PC-3 (cell line): ENCODE measurements at regions of chr10 and their contacts with region 1.

Region 1: DNA sequence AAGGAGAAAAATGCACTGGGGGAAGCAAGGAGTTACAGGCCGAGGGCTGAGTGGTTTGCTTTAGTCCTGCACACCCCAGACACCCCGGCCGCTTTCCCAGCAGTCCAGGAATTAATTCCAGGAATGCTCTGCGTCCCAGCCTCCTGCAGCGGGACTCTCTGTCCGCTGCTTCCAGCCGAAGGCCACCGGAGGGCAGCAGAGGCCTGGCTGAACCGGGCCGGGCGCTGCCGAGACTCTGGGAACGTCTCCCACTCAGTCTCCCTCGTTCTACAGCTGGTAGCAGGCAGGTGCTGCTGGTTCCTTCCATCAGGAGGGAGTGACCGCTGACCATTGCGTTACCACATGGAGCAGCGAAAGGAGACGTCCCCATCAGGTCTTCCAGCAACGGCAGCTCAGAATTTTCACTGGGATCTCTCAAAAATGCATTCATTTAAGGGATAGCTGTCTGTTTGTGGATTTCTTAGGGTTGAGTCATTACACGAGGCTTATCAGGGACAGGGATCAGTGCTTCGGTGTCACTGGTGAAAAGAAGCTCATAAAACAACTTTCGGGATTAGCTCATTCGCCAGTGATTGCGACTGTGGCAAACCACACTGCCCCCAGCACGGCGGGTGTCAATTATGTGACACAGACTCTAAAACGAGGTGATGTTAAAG is 24.9 kb upstream of the PITRM1 start:
- DNase-seq: peak; percentile 74
- ATAC-seq: peak; percentile 83
- H3K4me3 ChIP-seq: peak overlapping the region; percentile 56
- H3K27ac ChIP-seq: peak overlapping the region; percentile 83
- H3K4me1 ChIP-seq: peaks cover 15% of the 10 kb centered on the region
- H3K27me3 ChIP-seq: no peaks in the 10 kb centered on the region
- CTCF ChIP-seq: peak; percentile 72

Region 2: GRCh38 chr10:3226960-3227744 is 29.7 kb after region 1 on chr10:
- CTCF ChIA-PET with region 1: interaction called, 6 read pairs
- POLR2A ChIA-PET with region 1: no interaction called
- intact Hi-C with region 1: loop called (anchors 2 kb)
- DNase-seq: peak; percentile 79
- ATAC-seq: peak; percentile 95
- H3K4me3 ChIP-seq: peak overlapping the region; percentile 47; the same call in 1 of the 2 replicates
- H3K27ac ChIP-seq: peak overlapping the region; percentile 93
- H3K4me1 ChIP-seq: peaks cover 20% of the 10 kb centered on the region
- H3K27me3 ChIP-seq: no peaks in the 10 kb centered on the region
- CTCF ChIP-seq: no peak

Region 3: DNA sequence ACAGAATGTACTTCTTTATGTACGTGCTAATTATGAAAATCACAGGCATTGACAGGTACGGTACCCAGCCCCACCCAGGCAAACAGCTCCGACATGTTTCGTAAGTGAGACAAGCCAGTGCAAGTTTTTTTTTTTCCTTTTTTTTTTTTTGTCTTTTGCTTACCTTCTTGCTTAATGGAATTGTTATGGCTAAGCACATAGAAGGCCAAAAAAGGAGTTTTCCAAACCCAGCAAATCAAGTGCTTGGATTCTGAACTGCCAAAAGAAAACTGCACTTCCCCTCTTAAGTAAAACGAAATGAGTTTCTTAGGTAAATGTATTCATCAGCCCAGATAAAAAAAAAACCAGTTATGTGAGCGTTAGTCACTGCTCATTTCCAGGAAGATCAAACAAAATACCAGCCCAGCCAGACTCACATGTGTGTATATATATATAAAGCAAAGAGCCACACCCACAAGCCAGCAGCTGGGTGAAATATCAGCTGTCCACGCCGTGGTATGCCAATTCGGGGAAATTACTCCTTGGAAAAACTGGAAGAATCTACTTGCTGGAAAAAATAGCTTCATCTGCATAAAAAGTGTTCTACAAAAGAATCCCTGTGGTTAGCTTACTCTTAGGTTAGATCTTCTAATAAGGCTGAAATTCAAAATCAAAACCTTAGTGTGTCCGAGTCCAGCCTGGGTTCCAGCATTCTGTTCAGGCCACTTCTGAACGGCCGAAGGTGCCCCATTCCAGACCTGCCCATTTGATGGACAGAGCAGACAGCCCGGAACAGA is 579.5 kb after region 1 on chr10:
- CTCF ChIA-PET with region 1: interaction called, 5 read pairs
- POLR2A ChIA-PET with region 1: no interaction called
- intact Hi-C with region 1: loop called (anchors 5 kb)
- DNase-seq: peak; percentile 83
- ATAC-seq: peak; percentile 18
- H3K4me3 ChIP-seq: no peak overlapping the region
- H3K27ac ChIP-seq: peak overlapping the region; percentile 86
- H3K4me1 ChIP-seq: peaks cover 65% of the 10 kb centered on the region
- H3K27me3 ChIP-seq: no peaks in the 10 kb centered on the region
- CTCF ChIP-seq: no peak

Region 4: GRCh38 chr10:4067531-4067930 is 870.1 kb after region 1 on chr10:
- CTCF ChIA-PET with region 1: no interaction called
- POLR2A ChIA-PET with region 1: no interaction called
- intact Hi-C with region 1: loop called (anchors 10 kb)
- DNase-seq: peak; percentile 5
- ATAC-seq: no peak; the same call in 1 of the 2 replicates
- H3K4me3 ChIP-seq: no peak overlapping the region
- H3K27ac ChIP-seq: peak overlapping the region; percentile 99
- H3K4me1 ChIP-seq: peaks cover 24% of the 10 kb centered on the region
- H3K27me3 ChIP-seq: no peaks in the 10 kb centered on the region
- CTCF ChIP-seq: no peak

Region 5: DNA sequence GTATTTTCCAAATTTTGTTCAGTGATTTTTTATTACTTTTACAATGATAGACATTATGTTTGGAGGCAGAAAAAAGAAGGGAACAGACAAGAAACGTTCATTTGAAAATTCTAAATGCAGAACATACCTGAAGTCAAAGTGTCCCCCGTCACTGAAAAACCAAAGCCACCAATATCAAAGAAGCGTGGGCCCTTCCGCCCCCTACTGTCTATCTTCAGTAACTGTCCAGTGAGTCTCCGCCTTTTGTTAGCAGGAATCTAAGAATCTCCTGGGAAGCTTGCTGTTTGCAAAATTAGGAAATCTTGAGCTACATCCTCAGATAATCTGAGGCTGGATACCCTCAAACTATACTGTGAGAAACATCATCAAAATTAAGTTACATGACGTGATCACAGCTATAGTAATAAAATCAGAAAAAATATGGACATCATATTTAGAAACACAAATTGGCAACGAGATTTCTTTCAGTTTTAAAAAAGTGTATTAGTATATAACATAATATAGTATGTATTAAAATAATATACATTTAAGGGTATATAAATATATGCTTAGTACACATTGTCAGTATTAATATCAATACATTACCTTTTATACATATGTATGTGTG is 1459.2 kb after region 1 on chr10:
- CTCF ChIA-PET with region 1: no interaction called
- POLR2A ChIA-PET with region 1: no interaction called
- intact Hi-C with region 1: loop called (anchors 10 kb)
- DNase-seq: peak; percentile 64
- ATAC-seq: 0 out of 2 replicates have a peak, but pooled peaks have one; percentile 35
- H3K4me3 ChIP-seq: no peak overlapping the region
- H3K27ac ChIP-seq: peak overlapping the region; percentile 46
- H3K4me1 ChIP-seq: peaks cover 27% of the 10 kb centered on the region
- H3K27me3 ChIP-seq: no peaks in the 10 kb centered on the region
- CTCF ChIP-seq: peak; percentile 77